Activated B cell treated with CpG ODN at 0.5 μM for 24 hours (primary cell): ENCODE measurements at regions of chr11 and their contacts with region 1.

Region 1: DNA sequence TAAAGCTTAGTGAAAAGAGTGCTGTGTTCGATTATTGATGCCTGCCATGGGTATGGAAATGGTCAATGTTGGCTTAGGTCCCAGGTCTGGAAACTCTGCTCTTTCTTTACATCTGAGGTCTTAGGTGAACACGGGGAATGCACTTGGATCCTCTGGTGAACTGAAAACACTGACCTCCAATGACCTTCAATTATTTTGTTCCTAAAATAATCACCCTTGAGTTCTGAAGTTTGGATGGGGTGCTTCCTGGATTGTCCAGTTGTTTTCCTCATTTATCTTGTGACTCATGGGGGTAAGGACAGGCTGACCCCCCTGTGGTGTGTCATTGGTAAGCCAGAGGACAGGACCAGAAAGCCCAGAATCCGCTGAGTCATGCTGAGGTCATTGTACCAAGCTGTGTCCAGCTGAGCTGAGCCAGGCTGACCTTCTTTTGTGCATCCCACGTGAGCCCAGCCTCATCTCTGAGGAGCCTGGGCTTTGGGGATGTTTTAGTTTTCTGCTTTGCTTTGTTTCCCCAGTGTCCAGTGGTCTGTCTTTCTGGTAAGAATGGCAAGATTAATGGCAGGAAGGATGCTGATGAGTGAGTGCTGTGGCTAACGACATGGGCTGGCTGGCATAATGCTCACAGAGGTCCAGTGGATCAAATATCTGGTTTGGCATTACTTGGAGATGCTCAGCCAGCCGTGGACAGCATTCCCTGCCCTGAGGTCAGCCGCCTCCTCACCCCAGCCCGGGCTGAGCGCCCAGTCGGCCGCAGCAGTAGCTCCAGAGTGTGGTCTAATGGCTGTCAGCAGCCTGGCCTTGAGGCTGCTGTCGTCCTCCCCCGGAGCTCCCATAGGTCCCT is 35.6 kb downstream of the AMPD3 start:
- DNase-seq: no peak
- ATAC-seq: no peak
- H3K4me3 Mint-ChIP-seq: no peak overlapping the region
- H3K27ac Mint-ChIP-seq: peak overlapping the region; percentile 91
- H3K4me1 Mint-ChIP-seq: peaks cover 43% of the 10 kb centered on the region
- H3K27me3 Mint-ChIP-seq: no peaks in the 10 kb centered on the region
- CTCF ChIP-seq: no peak

Region 2: GRCh38 chr11:10441652-10442503 is 48.7 kb before region 1 on chr11:
- CTCF ChIA-PET with region 1: interaction called, 5 read pairs
- POLR2A ChIA-PET with region 1: interaction called, 20 read pairs
- intact Hi-C with region 1: no loop called
- DNase-seq: no peak
- ATAC-seq: peak; percentile 84
- H3K4me3 Mint-ChIP-seq: peak overlapping the region; percentile 60
- H3K27ac Mint-ChIP-seq: peak overlapping the region; percentile 97
- H3K4me1 Mint-ChIP-seq: peaks cover 48% of the 10 kb centered on the region
- H3K27me3 Mint-ChIP-seq: no peaks in the 10 kb centered on the region
- CTCF ChIP-seq: no peak

Region 3: DNA sequence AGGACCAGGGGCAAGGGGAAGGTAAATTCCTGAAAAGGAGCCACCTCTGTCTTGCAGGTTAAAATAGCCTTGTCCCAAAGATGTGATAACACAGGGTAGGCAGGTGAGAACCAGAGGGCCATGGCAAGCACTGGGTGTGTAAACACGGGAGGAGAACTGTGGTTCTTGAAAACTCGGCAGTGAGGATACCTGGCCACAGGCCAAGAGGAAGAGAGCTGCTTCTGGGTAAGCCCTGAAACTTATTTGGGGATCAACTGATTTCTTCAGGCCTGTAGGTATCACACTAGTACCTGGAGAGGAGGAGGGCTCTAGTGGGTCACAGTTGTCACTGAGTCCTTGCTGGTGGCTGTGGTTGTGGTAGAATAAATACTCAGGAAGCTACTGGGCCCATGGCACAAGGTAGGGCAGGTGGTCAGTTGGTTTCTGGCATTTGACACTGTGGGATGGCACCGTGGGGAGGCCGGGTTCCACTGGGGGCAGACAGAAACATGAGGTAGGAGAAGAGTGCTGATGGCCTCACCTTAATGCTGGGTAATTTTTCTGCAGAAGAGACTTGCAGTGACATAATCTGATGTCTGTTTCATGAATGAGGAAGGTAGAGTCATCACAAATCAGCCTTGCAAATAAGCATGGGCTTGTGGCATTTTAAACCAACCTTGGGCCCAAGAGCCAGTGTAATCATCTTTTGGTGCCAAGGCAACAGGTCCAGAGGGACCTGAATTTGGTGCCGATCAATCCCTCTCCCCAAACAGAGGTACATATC is 13.5 kb before region 1 on chr11:
- CTCF ChIA-PET with region 1: interaction called, 3 read pairs
- POLR2A ChIA-PET with region 1: interaction called, 10 read pairs
- intact Hi-C with region 1: no loop called
- DNase-seq: no peak
- ATAC-seq: peak; percentile 70
- H3K4me3 Mint-ChIP-seq: peak overlapping the region; percentile 28
- H3K27ac Mint-ChIP-seq: peak overlapping the region; percentile 83
- H3K4me1 Mint-ChIP-seq: peaks cover 55% of the 10 kb centered on the region
- H3K27me3 Mint-ChIP-seq: no peaks in the 10 kb centered on the region
- CTCF ChIP-seq: no peak

Region 4: GRCh38 chr11:10502770-10503169 is 12.2 kb after region 1 on chr11:
- CTCF ChIA-PET with region 1: no interaction called
- POLR2A ChIA-PET with region 1: interaction called, 10 read pairs
- intact Hi-C with region 1: loop called (anchors 1 kb)
- DNase-seq: no peak
- ATAC-seq: peak; percentile 40
- H3K4me3 Mint-ChIP-seq: peak overlapping the region; percentile 12
- H3K27ac Mint-ChIP-seq: peak overlapping the region; percentile 77
- H3K4me1 Mint-ChIP-seq: peaks cover 26% of the 10 kb centered on the region
- H3K27me3 Mint-ChIP-seq: no peaks in the 10 kb centered on the region
- CTCF ChIP-seq: no peak

Region 5: DNA sequence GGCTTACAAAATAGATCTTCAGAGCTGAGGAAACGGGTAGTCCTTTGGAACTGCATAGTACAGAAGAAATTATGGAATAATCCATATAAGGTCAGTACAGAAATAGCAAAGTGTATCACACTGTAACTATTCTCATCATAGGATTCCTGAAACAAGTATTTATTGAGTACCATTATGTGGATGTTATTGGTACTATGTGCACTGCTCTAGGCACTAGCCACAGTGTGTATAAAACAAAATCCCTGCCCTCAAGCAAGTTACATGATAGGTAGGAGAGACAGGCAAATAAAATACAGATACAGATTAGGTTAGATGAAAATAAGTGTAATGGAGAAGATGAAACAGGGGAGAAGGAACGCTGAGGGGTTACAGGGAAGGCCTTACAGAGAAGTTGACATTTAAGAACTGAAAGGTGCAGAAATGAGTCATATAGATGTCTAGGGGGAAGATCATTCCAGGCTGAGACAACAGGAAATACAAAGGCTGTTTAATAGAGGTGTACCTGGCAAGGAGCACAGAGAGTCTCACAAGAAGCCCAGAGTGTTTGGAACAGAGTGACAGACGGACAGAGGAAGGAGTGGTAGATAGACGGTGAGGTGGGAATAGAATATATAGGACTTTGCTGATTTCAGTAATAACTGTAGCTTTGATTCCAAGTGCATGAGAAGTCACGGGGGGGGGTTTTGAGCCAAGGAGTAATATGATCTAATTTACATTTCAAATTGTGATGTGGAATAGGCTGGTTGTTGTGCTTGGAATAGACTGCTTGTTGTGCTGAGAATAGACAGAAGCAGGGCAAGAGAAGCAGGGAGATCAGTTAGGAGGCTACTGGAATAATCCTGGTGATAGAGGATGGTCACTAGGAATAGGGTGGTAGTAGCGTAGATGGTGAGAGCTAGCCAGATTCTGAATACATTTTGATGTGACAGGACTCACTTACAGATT is 36.6 kb after region 1 on chr11:
- CTCF ChIA-PET with region 1: no interaction called
- POLR2A ChIA-PET with region 1: no interaction called
- intact Hi-C with region 1: loop called (anchors 5 kb)
- DNase-seq: no peak
- ATAC-seq: peak; percentile 95
- H3K4me3 Mint-ChIP-seq: peak overlapping the region; percentile 21
- H3K27ac Mint-ChIP-seq: peak overlapping the region; percentile 77
- H3K4me1 Mint-ChIP-seq: peaks cover 21% of the 10 kb centered on the region
- H3K27me3 Mint-ChIP-seq: no peaks in the 10 kb centered on the region
- CTCF ChIP-seq: no peak

Region 6: DNA sequence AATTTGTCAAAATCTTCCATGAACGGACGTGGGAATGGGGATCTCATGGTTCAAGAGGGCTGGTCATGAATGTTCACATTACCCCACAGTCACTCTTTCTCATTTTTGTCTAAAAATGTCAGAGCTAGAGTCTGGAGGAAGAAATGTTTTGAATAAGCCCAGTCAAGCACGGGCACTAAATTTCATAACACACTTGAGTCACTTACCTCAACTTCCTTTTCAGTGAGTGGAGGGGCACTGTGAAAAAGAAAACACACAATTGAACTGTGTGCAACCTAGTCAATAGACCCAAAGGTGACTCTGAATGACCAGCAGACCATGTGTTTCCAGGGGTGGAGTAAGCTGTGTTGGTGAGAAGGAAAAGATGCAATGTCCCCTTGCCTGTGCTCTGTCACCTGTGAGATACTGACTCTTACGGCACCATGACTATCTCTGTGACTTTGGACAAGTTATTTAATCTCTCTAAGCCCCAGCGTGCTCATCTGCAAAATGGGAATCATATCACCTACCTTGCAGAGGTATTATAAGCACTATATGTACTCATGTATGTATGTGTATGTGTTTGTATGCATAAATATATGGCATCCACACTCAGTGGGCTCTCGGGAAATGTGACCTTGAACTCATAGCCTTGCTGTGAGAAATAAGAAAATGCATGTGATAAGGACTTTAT is 116.1 kb after region 1 on chr11:
- CTCF ChIA-PET with region 1: no interaction called
- POLR2A ChIA-PET with region 1: interaction called, 10 read pairs
- intact Hi-C with region 1: no loop called
- DNase-seq: no peak
- ATAC-seq: peak; percentile 84
- H3K4me3 Mint-ChIP-seq: peak overlapping the region; percentile 73
- H3K27ac Mint-ChIP-seq: peak overlapping the region; percentile 90
- H3K4me1 Mint-ChIP-seq: peaks cover 99% of the 10 kb centered on the region
- H3K27me3 Mint-ChIP-seq: no peaks in the 10 kb centered on the region
- CTCF ChIP-seq: no peak